ENCODE measurements at regions of chr14 and their contacts with region 1.

Region 1: DNA sequence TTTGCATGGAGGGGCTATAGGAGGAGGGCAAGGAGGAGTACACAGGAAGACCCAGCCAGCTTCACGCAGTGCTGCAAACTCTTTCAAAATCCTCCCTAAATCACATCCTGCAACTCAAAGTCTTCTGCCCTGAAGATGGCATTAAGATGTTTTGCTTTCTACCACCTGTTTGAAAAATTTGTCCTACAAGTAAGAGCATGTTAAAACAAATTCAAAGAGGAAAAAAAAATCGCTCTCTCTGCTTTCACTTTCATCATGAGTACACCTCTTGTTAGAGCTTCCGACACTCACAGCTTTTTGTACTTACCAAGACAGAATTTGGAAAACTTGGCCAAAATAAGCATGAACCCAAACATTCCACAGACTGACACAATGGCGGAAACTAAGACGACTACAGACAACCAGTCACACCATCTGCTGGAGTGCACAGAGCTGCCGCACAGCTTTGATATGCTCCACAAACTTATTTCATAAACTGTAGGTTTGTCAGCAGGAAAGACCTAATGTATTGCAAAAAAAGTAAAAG is 21.3 kb downstream of the GCH1 start:
- DNase-seq: peak; percentile 45
- ATAC-seq: peak; percentile 61
- H3K4me3 Mint-ChIP-seq: peak overlapping the region; percentile 77
- H3K27ac Mint-ChIP-seq: peak overlapping the region; percentile 97
- H3K4me1 Mint-ChIP-seq: peaks cover 40% of the 10 kb centered on the region
- H3K27me3 Mint-ChIP-seq: no peaks in the 10 kb centered on the region
- CTCF ChIP-seq: no peak

Region 2: GRCh38 chr14:54709444-54709843 is 171.9 kb before region 1 on chr14:
- CTCF ChIA-PET with region 1: no interaction called
- POLR2A ChIA-PET with region 1: no interaction called
- intact Hi-C with region 1: no loop called
- DNase-seq: peak; percentile 40
- ATAC-seq: peak; percentile 93
- H3K4me3 Mint-ChIP-seq: no peak overlapping the region
- H3K27ac Mint-ChIP-seq: no peak overlapping the region
- H3K4me1 Mint-ChIP-seq: peaks cover 18% of the 10 kb centered on the region
- H3K27me3 Mint-ChIP-seq: peaks cover 2% of the 10 kb centered on the region
- CTCF ChIP-seq: no peak

Region 3: GRCh38 chr14:54902521-54903420 is 21.5 kb after region 1 on chr14 and contains the start of gene GCH1:
- CTCF ChIA-PET with region 1: interaction called, 40 read pairs
- POLR2A ChIA-PET with region 1: interaction called, 22 read pairs
- intact Hi-C with region 1: no loop called
- DNase-seq: peak; percentile 74
- ATAC-seq: peak; percentile 77
- H3K4me3 Mint-ChIP-seq: peak within 1 kb of the TSS; percentile 84
- H3K27ac Mint-ChIP-seq: peak within 1 kb of the TSS; percentile 84
- H3K4me1 Mint-ChIP-seq: peaks cover 27% of the 10 kb centered on the region
- H3K27me3 Mint-ChIP-seq: no peaks in the 10 kb centered on the region
- CTCF ChIP-seq: peak; percentile 76
- total RNA-seq, gene GCH1: 35.4 to 38.1 TPM

Region 4: GRCh38 chr14:55180434-55180833 is 299.1 kb after region 1 on chr14:
- CTCF ChIA-PET with region 1: no interaction called
- POLR2A ChIA-PET with region 1: no interaction called
- intact Hi-C with region 1: no loop called
- DNase-seq: no peak
- ATAC-seq: no peak
- H3K4me3 Mint-ChIP-seq: no peak overlapping the region
- H3K27ac Mint-ChIP-seq: no peak overlapping the region
- H3K4me1 Mint-ChIP-seq: no peaks in the 10 kb centered on the region
- H3K27me3 Mint-ChIP-seq: no peaks in the 10 kb centered on the region
- CTCF ChIP-seq: no peak

Measured in activated CD8-positive, alpha-beta T cell treated with anti-CD3 and anti-CD28 coated beads for 36 hours (primary cell).